ENCODE measurements at regions of chr4 and their contacts with region 1.

Region 1: DNA sequence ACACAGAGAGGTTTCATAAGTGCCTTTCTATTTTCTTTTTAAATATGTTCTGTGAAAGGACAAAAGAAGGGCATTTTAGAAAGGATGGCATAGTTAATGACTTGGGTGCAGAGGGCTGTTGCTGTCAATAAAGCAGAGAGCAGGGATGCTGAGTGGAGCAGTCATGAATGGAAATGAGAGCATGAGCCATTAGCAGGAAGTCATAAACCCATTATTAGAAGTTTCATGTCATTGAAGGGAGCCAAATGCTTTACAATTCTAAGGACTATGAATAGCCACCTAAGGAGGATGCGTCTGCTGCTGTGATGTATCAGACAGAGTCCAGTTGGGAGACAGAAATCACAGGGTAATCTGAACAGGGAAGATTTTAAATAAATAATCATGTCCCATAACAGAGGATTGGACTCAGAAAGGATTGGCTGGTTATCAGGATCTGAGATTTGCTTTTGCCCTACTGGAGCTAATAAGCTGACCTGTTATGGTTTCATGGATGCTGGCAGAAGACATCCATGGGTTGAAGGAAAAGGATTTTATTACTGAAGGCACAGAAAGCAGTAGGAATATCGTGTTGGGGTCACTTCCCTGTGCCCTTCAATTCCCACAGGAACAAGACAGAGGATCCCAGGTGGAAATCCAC is 47.5 kb upstream of the WDR19 start:
- DNase-seq: no peak
- H3K4me3 ChIP-seq: no peak overlapping the region
- H3K27ac ChIP-seq: no peak overlapping the region
- H3K4me1 ChIP-seq: no peaks in the 10 kb centered on the region
- H3K27me3 ChIP-seq: no peaks in the 10 kb centered on the region
- CTCF ChIP-seq: no peak

Region 2: DNA sequence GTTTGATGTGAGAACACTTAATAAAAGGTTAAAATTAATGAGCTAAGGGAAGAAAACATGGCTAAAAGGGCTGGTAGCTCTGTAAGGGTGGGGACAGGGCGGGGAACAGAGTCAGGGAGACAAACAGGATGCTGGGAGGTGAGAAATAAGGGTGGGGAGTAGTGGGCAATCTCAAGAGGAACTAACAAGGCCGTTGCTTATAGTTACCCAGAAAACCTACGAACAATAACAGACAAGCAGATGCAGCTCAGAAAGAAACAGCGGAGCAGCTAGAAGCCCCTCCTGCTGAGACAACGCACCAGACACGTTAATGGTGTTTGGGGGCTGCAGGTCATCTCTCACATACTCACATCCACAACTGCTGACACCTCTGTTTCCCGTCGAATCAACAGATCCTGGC is 480.5 kb before region 1 on chr4:
- intact Hi-C with region 1: no loop called
- DNase-seq: no peak
- H3K4me3 ChIP-seq: no peak overlapping the region
- H3K27ac ChIP-seq: no peak overlapping the region
- H3K4me1 ChIP-seq: no peaks in the 10 kb centered on the region
- H3K27me3 ChIP-seq: no peaks in the 10 kb centered on the region
- CTCF ChIP-seq: no peak

Region 3: DNA sequence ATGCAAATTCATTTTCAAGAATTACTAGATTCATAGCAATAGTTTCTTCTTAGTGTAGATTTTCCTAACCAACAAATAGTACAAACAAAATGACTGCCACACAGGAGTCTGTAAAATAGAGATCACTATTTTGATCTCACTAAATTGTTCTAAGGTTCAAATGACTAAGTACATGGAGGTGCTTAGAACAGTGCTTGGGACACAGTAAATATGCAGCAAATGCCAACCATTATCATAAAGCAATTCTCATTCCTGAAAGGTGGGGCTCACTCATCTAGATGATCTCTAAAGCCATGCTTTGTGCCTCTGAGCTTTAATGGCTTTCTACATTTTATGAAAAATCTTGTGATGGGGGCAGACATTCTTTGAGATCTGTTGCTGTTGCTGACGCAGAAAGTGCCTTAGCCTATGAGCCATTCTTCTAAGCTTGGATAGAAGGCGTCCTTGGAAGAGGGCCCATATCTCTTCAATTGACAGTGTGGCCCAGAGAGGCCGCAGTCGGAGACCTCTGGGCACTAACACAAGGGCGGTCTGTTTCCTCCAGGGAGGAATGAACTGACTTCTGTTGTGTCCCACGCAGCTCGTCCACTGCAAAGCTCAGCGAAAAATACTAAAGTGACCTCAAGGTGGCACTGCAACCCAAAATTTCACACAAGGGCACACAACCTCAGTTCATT is 375.6 kb before region 1 on chr4:
- intact Hi-C with region 1: loop called (anchors 5 kb)
- DNase-seq: peak; percentile 71
- H3K4me3 ChIP-seq: no peak overlapping the region
- H3K27ac ChIP-seq: no peak overlapping the region
- H3K4me1 ChIP-seq: no peaks in the 10 kb centered on the region
- H3K27me3 ChIP-seq: no peaks in the 10 kb centered on the region
- CTCF ChIP-seq: peak; percentile 68

Region 4: GRCh38 chr4:38902695-38903094 is 232.1 kb before region 1 on chr4:
- intact Hi-C with region 1: loop called (anchors 5 kb)
- DNase-seq: no peak
- H3K4me3 ChIP-seq: no peak overlapping the region
- H3K27ac ChIP-seq: no peak overlapping the region
- H3K4me1 ChIP-seq: peaks cover 8% of the 10 kb centered on the region
- H3K27me3 ChIP-seq: no peaks in the 10 kb centered on the region
- CTCF ChIP-seq: peak; percentile 23

Region 5: DNA sequence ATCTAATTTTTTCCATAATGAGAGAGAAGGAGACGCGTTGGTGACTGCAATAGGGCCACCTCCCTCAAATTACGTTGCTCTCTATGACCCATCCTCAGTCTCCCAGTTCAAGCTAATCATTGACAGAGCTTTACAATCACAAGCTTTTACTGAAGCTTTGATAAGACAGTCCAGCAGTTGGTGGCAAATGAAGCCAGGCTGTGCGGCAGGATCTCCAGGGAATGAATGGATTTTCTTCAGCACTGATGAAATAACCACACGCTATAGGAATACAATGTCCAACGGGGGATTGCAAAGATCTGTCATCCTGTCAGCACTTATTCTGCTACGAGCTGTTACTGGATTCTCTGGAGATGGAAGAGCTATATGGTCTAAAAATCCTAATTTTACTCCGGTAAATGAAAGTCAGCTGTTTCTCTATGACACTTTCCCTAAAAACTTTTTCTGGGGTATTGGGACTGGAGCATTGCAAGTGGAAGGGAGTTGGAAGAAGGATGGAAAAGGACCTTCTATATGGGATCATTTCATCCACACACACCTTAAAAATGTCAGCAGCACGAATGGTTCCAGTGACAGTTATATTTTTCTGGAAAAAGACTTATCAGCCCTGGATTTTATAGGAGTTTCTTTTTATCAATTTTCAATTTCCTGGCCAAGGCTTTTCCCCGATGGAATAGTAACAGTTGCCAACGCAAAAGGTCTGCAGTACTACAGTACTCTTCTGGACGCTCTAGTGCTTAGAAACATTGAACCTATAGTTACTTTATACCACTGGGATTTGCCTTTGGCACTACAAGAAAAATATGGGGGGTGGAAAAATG is 272.2 kb after region 1 on chr4 and contains the start of gene KLB:
- intact Hi-C with region 1: no loop called
- DNase-seq: peak; percentile 69
- H3K4me3 ChIP-seq: no peak within 1 kb of the TSS
- H3K27ac ChIP-seq: no peak within 1 kb of the TSS
- H3K4me1 ChIP-seq: no peaks in the 10 kb centered on the region
- H3K27me3 ChIP-seq: no peaks in the 10 kb centered on the region
- CTCF ChIP-seq: no peak
- total RNA-seq, gene KLB: 0.40 to 0.64 TPM